AG04450 (cell line): ENCODE measurements at regions of chr16 and their contacts with region 1.

Region 1: GRCh38 chr16:70737377-70738082 is 51.7 kb upstream of the MTSS2 start:
- DNase-seq: peak; percentile 97
- H3K4me3 ChIP-seq: peak overlapping the region; percentile 5; the same call in 1 of the 2 replicates
- H3K27ac ChIP-seq: peak overlapping the region; percentile 99
- H3K27me3 ChIP-seq: no peaks in the 10 kb centered on the region
- CTCF ChIP-seq: no peak

Region 2: DNA sequence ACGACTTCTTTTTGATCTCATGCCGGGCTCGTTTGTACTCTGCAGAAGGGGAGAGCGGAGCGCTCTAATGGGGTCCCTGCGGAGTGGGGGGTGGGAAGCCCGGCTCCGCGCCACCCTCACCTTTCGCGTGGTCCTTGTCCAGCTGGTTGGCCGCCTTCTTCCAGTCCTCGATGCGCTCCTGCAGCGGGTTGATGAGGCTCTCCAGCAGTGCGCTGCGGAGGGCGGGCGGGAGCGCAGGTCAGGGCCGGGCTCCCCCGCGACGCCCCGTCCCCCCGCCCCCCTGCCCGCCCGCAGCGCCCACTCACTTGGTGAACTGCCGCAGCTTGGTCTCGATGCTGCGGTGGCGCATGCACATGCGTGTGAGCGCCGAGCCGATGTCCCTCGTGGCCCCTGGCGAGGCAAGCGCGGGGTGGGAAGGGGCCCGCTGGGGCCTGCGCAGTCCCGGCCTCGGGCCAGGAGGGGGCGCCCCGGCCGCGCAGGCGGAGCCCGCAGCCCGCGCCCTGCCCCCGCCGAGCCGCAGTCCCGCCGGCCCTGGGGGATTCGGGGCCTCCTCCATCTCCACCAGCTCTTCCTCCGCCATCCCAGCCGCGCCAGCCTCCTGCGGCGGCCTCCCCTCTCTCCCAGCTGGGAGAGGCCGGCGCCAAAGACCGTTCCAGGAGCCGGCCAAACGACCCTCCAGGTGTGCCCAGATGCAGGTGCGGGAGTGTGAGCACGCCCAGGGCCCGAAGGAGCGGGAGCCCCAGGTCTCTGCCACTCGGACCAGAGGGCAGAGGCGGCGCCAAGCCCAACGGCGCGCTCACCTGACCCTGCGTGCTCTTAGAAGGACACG is 57.6 kb before region 1 on chr16:
- CTCF ChIA-PET with region 1: interaction called, 17 read pairs
- POLR2A ChIA-PET with region 1: no interaction called
- DNase-seq: no peak
- H3K4me3 ChIP-seq: no peak overlapping the region
- H3K27ac ChIP-seq: no peak overlapping the region
- H3K27me3 ChIP-seq: no peaks in the 10 kb centered on the region
- CTCF ChIP-seq: peak; percentile 13

Region 3: DNA sequence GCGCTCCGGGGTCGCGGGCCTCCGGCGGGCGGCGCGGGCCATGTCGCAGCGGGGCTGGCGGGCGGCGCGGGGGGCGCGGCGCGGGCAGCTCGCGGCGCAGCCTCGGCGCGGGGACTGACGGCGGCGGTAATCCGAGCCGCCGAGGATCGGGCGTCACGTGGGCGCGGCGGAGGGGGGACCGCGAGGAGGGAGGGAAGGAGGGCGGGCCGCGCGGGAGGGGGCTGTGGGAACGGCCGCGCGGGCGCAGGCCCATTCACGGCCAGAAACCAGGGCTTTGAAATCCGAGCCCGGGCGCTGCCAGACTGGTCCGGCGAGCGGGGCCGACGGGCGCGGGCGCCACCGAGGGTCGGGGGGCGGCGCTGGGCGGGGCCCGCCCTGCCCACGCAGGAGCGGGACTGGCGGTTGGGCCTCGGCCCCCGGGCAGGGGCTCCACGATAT is 51.6 kb before region 1 on chr16 and contains the start of gene MTSS2:
- CTCF ChIA-PET with region 1: interaction called, 23 read pairs
- POLR2A ChIA-PET with region 1: interaction called, 6 read pairs
- DNase-seq: peak; percentile 68
- H3K4me3 ChIP-seq: peak within 1 kb of the TSS; percentile 82
- H3K27ac ChIP-seq: peak within 1 kb of the TSS; percentile 52
- H3K27me3 ChIP-seq: no peaks in the 10 kb centered on the region
- CTCF ChIP-seq: no peak
- polyA plus RNA-seq, gene MTSS2: 57.9 and 80.1 TPM in 2 replicates

Region 4: DNA sequence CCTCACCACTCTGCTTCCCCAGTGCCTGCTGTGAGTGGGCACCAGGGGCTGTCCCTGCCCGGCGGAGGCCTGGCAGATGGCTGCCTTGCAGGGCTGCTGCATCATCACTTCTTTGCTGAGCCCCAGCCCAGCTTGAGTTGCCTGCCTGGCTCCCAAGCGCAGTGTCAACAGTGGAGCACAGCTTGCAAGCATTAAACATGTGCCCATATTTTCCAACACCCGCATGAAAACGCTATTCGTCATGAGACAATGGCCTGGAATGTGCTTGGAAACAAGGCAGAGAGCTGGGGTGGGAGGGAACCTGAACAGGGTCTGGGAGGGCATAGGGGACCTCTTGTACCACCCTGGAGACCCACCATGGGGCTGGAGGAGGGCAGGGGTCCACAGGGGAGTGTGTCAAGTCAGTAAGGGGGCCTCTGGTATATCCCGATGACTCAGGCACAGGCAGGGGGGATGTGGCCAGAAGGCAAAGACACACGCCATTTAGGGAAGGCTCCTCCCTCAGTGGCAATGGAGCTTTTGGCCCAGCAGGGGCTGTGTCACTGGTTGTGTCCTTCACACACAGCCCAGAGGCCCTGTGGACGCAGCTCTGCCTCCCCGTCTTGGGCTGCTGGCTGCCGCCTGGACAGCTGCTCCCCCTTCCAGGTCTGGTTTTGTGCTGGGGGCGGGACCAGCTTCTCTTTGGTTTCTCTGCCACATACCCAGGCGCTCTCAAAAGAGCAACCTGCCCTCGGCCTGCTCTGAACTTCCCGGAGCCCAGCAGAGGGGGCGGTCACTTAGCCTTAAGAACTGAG is 34.3 kb before region 1 on chr16:
- CTCF ChIA-PET with region 1: interaction called, 10 read pairs
- POLR2A ChIA-PET with region 1: interaction called, 13 read pairs
- DNase-seq: peak; percentile 84
- H3K4me3 ChIP-seq: no peak overlapping the region
- H3K27ac ChIP-seq: peak overlapping the region; percentile 99
- H3K27me3 ChIP-seq: no peaks in the 10 kb centered on the region
- CTCF ChIP-seq: peak; percentile 60

Region 5: GRCh38 chr16:70715055-70715858 is 22.3 kb before region 1 on chr16:
- CTCF ChIA-PET with region 1: interaction called, 10 read pairs
- POLR2A ChIA-PET with region 1: interaction called, 9 read pairs
- DNase-seq: peak; percentile 92
- H3K4me3 ChIP-seq: no peak overlapping the region
- H3K27ac ChIP-seq: peak overlapping the region; percentile 98
- H3K27me3 ChIP-seq: no peaks in the 10 kb centered on the region
- CTCF ChIP-seq: peak; percentile 20; the same call in 1 of the 2 replicates

Region 6: GRCh38 chr16:70750893-70751475 is 13.5 kb after region 1 on chr16:
- CTCF ChIA-PET with region 1: interaction called, 11 read pairs
- POLR2A ChIA-PET with region 1: interaction called, 11 read pairs
- DNase-seq: peak; percentile 96
- H3K4me3 ChIP-seq: no peak overlapping the region; the same call in 1 of the 2 replicates
- H3K27ac ChIP-seq: peak overlapping the region; percentile 84
- H3K27me3 ChIP-seq: no peaks in the 10 kb centered on the region
- CTCF ChIP-seq: no peak